ENCODE measurements at regions of chr18 and their contacts with region 1.

Region 1: GRCh38 chr18:12295901-12296386 is 12.1 kb upstream of the TUBB6 start:
- DNase-seq: peak; percentile 60
- H3K4me3 ChIP-seq: no peak overlapping the region
- H3K27ac ChIP-seq: peak overlapping the region; percentile 71
- H3K27me3 ChIP-seq: no peaks in the 10 kb centered on the region
- CTCF ChIP-seq: no peak

Region 2: GRCh38 chr18:12246849-12247808 is 48.8 kb before region 1 on chr18:
- in situ Hi-C with region 1: loop called (anchors 10 kb)
- DNase-seq: peak; percentile 38
- H3K4me3 ChIP-seq: no peak overlapping the region
- H3K27ac ChIP-seq: no peak overlapping the region
- H3K27me3 ChIP-seq: no peaks in the 10 kb centered on the region
- CTCF ChIP-seq: peak; percentile 70

Measured in brain microvascular endothelial cell (primary cell).